ENCODE measurements at regions of chr11 and their contacts with region 1.

Region 1: GRCh38 chr11:126062679-126063506 is at the start of gene CDON:
- DNase-seq: peak; percentile 88 to 95 (median 93)
- H3K4me3 ChIP-seq: peak within 1 kb of the TSS; percentile 47 to 76
- H3K4me3 Mint-ChIP-seq: peak within 1 kb of the TSS; percentile 86 to 96 (median 90)
- H3K27ac ChIP-seq: peak within 1 kb of the TSS; percentile 73
- H3K27ac Mint-ChIP-seq: peak within 1 kb of the TSS; percentile 84 to 99 (median 96)
- H3K4me1 ChIP-seq: peaks cover 14% of the 10 kb centered on the region
- H3K4me1 Mint-ChIP-seq: peaks cover 5 to 14% (median 9%) of the 10 kb centered on the region in 4 donors
- H3K27me3 ChIP-seq: no peaks in the 10 kb centered on the region
- H3K27me3 Mint-ChIP-seq: peaks cover 0 to 2% of the 10 kb centered on the region in 2 donors
- total RNA-seq, gene CDON: 2.7 to 3.1 TPM

Region 2: GRCh38 chr11:125902927-125903710 is 159.8 kb before region 1 on chr11 and contains the start of gene PUS3:
- CTCF ChIA-PET with region 1: no interaction called
- POLR2A ChIA-PET with region 1: interaction called, 3 read pairs
- intact Hi-C with region 1: loop called (anchors 1 kb)
- DNase-seq: peak; percentile 83 to 88 (median 84)
- H3K4me3 ChIP-seq: peak within 1 kb of the TSS; percentile 45 to 58
- H3K4me3 Mint-ChIP-seq: peak within 1 kb of the TSS; percentile 92 to 97 (median 95)
- H3K27ac ChIP-seq: peak within 1 kb of the TSS; percentile 81
- H3K27ac Mint-ChIP-seq: peak within 1 kb of the TSS; percentile 88 to 96 (median 92)
- H3K4me1 ChIP-seq: peaks cover 18% of the 10 kb centered on the region
- H3K4me1 Mint-ChIP-seq: peaks cover 20 to 49% (median 37%) of the 10 kb centered on the region in 4 donors
- H3K27me3 ChIP-seq: peaks cover 12% of the 10 kb centered on the region
- H3K27me3 Mint-ChIP-seq: peaks cover 19 to 22% of the 10 kb centered on the region in 2 donors
- total RNA-seq, gene PUS3: 12.4 to 12.6 TPM

Region 3: DNA sequence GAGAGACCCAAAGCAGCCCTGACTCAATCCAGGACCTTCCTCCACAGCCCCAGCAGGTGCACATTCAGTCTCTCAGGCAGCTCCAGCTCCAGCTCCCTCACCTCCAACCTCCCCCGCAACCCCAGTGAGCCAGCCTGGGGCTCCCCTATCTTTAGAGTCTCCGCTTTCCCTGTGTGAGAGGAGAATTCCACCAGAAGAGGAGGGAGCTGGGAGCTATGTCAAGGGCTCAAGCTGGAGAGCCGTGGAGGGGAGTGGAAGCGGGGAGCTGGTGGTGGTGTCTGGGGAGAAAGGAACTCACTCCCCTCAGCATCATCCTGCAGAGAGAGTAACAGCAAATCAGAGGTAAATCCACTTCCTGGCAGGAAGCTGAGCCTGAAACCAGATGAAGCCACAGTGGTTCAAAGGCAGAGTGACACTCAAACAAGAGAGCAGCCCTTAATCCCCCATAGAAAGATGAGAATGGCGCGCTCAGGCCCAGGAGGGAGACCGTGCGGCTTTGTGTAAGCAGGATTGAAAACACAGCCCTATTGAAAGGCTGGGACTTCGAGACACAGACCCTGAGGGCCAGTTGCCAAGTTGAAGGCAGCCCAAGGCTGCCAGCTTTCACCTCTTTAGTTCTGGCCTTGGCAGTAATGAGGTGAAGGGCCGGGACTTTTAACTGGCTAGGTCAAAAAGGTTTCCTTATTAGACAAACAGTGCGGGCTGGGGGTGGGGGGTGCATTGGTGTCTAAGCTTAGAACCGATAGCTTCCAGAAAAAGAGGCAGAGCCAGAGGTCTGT is 21.1 kb after region 1 on chr11:
- CTCF ChIA-PET with region 1: no interaction called
- POLR2A ChIA-PET with region 1: interaction called, 23 read pairs
- intact Hi-C with region 1: loop called (anchors 1 kb)
- DNase-seq: peak; percentile 53 to 60 (median 55)
- H3K4me3 ChIP-seq: peak overlapping the region in 1 of 2 donors; percentile 15
- H3K4me3 Mint-ChIP-seq: peak overlapping the region in 7 of 8 donors; percentile 59 to 88 (median 81)
- H3K27ac ChIP-seq: peak overlapping the region; percentile 38
- H3K27ac Mint-ChIP-seq: peak overlapping the region; percentile 90 to 97 (median 94)
- H3K4me1 ChIP-seq: peaks cover 27% of the 10 kb centered on the region
- H3K4me1 Mint-ChIP-seq: peaks cover 13 to 28% (median 18%) of the 10 kb centered on the region in 4 donors
- H3K27me3 ChIP-seq: no peaks in the 10 kb centered on the region
- H3K27me3 Mint-ChIP-seq: no peaks in the 10 kb centered on the region

Region 4: GRCh38 chr11:126211235-126212088 is 148.6 kb after region 1 on chr11 and contains the starts of genes FAM118B and RPUSD4:
- CTCF ChIA-PET with region 1: no interaction called
- POLR2A ChIA-PET with region 1: interaction called, 4 read pairs
- intact Hi-C with region 1: loop called (anchors 1 kb)
- DNase-seq: peak; percentile 98
- H3K4me3 ChIP-seq: peak within 1 kb of the TSS; percentile 44 to 91
- H3K4me3 Mint-ChIP-seq: peak within 1 kb of the TSS; percentile 99 to 100 (median 99)
- H3K27ac ChIP-seq: peak within 1 kb of the TSS; percentile 67
- H3K27ac Mint-ChIP-seq: peak within 1 kb of the TSS; percentile 91 to 99 (median 98)
- H3K4me1 ChIP-seq: peaks cover 24% of the 10 kb centered on the region
- H3K4me1 Mint-ChIP-seq: peaks cover 27 to 43% (median 32%) of the 10 kb centered on the region in 4 donors
- H3K27me3 ChIP-seq: no peaks in the 10 kb centered on the region
- H3K27me3 Mint-ChIP-seq: no peaks in the 10 kb centered on the region
- total RNA-seq, gene FAM118B: 12.6 to 13.2 TPM
- total RNA-seq, gene RPUSD4: 39.3 to 41.2 TPM

Measured in CD4-positive, alpha-beta memory T cell (primary cell).